Activated T-helper 2 cell treated with anti-CD3 and anti-CD28 coated beads, Interferon-gamma antibody, Interleukin-2, Interleukin-4, amounts not matched to agents 10 μg/mL and 5 μg/mL and 100 μg/mL, durations not matched to agents 14 hours and 24 hours and 36 hours (primary cell): ENCODE measurements at regions of chr6 and their contacts with region 1.

Region 1: GRCh38 chr6:13574149-13574570 is 241 bp upstream of the SIRT5 start:
- DNase-seq: peak; percentile 90
- H3K4me3 Mint-ChIP-seq: peak overlapping the region; percentile 98
- H3K27ac Mint-ChIP-seq: peak overlapping the region; percentile 99
- H3K4me1 Mint-ChIP-seq: peaks cover 9% of the 10 kb centered on the region
- H3K27me3 Mint-ChIP-seq: peaks cover 4% of the 10 kb centered on the region

Region 2: GRCh38 chr6:13336553-13336952 is 237.6 kb before region 1 on chr6:
- intact Hi-C with region 1: loop called (anchors 2 kb)
- DNase-seq: peak; percentile 63
- H3K4me3 Mint-ChIP-seq: no peak overlapping the region
- H3K27ac Mint-ChIP-seq: no peak overlapping the region
- H3K4me1 Mint-ChIP-seq: peaks cover 31% of the 10 kb centered on the region
- H3K27me3 Mint-ChIP-seq: peaks cover 1% of the 10 kb centered on the region

Region 3: GRCh38 chr6:13454286-13455221 is 119.6 kb before region 1 on chr6:
- intact Hi-C with region 1: loop called (anchors 1 kb)
- DNase-seq: peak; percentile 52
- H3K4me3 Mint-ChIP-seq: peak overlapping the region; percentile 30
- H3K27ac Mint-ChIP-seq: peak overlapping the region; percentile 71
- H3K4me1 Mint-ChIP-seq: peaks cover 47% of the 10 kb centered on the region
- H3K27me3 Mint-ChIP-seq: no peaks in the 10 kb centered on the region

Region 4: GRCh38 chr6:13614926-13615798 is 41.0 kb after region 1 on chr6 and contains the start of gene NOL7:
- intact Hi-C with region 1: loop called (anchors 1 kb)
- DNase-seq: peak; percentile 97
- H3K4me3 Mint-ChIP-seq: peak within 1 kb of the TSS; percentile 98
- H3K27ac Mint-ChIP-seq: peak within 1 kb of the TSS; percentile 93
- H3K4me1 Mint-ChIP-seq: peaks cover 31% of the 10 kb centered on the region
- H3K27me3 Mint-ChIP-seq: no peaks in the 10 kb centered on the region
- total RNA-seq, gene NOL7: 82.5 and 84.1 TPM in 2 replicates

Region 5: GRCh38 chr6:13814176-13814937 is 240.2 kb after region 1 on chr6 and contains the start of gene MCUR1:
- intact Hi-C with region 1: loop called (anchors 1 kb)
- DNase-seq: peak; percentile 81
- H3K4me3 Mint-ChIP-seq: peak within 1 kb of the TSS; percentile 90
- H3K27ac Mint-ChIP-seq: peak within 1 kb of the TSS; percentile 77
- H3K4me1 Mint-ChIP-seq: peaks cover 34% of the 10 kb centered on the region
- H3K27me3 Mint-ChIP-seq: peaks cover 11% of the 10 kb centered on the region
- total RNA-seq, gene MCUR1: 39.8 and 41.4 TPM in 2 replicates